Psoas muscle (tissue), 8 donors: ENCODE measurements at regions of chr18 and their contacts with region 1.

Region 1: DNA sequence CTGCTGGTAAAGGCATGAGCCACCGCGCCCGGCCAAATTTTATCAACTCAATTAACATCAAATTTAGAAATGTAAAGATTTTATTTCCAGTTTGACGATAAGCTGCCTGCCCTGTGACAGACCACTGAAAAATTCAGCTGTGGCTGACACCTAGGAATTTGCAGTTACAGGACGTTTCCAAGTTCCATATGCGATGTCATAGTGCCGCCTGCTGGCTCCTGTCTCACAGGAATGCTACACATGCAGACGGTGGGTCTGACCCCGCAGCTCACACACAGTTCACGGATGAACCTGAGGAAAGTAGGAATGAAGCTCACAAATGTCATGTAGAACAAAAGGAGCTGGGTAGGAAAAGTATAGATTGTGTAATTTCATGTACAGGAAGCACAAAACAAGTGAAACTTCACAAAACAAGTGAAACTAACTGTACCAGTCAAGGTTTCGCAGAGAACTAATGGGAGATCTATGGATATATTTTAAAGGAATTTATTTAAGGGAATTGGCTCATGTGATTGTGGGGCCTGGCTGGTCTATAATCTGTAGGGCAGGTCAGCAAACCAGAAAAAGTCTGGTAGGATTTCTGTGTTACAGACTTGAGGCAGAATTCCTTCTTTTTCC is 13.2 kb upstream of the SEH1L start:
- DNase-seq: peak; percentile 80 to 87
- ATAC-seq: peak; percentile 89 to 98 (median 93)
- H3K4me3 ChIP-seq: no peak overlapping the region
- H3K27ac ChIP-seq: no peak overlapping the region
- H3K4me1 ChIP-seq: no peaks in the 10 kb centered on the region
- H3K27me3 ChIP-seq: no peaks in the 10 kb centered on the region
- CTCF ChIP-seq: peak; percentile 93

Region 2: GRCh38 chr18:12726774-12727550 is 207.6 kb before region 1 on chr18:
- intact Hi-C with region 1: loop called (anchors 1 kb)
- DNase-seq: no peak
- ATAC-seq: peak; percentile 62 to 83 (median 72)
- H3K4me3 ChIP-seq: no peak overlapping the region
- H3K27ac ChIP-seq: no peak overlapping the region
- H3K4me1 ChIP-seq: no peaks in the 10 kb centered on the region
- H3K27me3 ChIP-seq: no peaks in the 10 kb centered on the region
- CTCF ChIP-seq: peak; percentile 94

Region 3: GRCh38 chr18:12744103-12744502 is 190.5 kb before region 1 on chr18:
- intact Hi-C with region 1: loop called in 1 of 2 experiments (anchors 5 kb)
- DNase-seq: no peak
- ATAC-seq: peak in 2 of 4 donors; percentile 56 to 62
- H3K4me3 ChIP-seq: no peak overlapping the region
- H3K27ac ChIP-seq: no peak overlapping the region
- H3K4me1 ChIP-seq: no peaks in the 10 kb centered on the region
- H3K27me3 ChIP-seq: no peaks in the 10 kb centered on the region
- CTCF ChIP-seq: peak; percentile 54

Region 4: DNA sequence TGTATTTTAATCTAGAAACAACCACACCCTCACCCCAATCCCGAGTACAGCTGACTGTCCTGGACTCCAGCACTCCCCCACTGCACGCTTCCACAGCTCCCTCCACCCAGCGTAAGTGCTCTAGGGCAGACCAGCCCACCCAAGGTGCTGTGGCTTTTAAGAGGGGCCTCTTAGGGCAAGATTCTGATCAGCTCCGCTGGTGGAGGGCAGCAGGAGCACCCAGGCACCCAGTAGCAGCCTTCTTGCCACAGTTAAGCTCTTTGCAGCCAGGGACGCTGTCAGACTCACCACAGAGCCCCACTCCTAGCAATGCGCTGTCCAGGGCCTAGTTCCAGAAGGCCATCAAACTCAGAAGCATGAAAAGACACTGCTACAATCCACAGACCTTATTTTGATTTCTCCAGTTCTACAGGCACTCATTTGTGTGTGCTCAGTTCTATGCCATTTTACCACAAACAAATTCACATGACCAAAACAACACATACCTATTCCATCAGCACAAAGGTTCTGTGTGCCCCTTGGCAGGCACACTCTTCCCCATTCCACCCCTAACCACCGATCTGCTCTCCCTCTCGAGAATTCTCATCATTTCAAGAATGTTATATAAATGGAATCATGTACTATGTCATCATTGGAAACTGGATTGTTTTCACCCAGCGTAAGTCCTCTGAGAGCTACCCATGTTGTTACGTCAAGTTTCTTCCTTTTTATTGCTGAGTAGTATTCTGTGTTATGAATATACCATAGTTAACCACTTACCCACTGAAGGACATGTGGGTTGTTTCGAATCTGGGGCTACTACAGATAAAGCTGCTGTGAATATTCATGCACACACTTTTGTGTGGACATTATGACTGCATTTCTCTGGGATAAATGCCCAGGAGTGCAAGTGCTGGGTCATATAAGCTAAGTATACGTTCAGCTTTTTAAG is 90.9 kb before region 1 on chr18:
- intact Hi-C with region 1: no loop called
- DNase-seq: no peak
- ATAC-seq: no peak
- H3K4me3 ChIP-seq: no peak overlapping the region
- H3K27ac ChIP-seq: no peak overlapping the region
- H3K4me1 ChIP-seq: peaks cover under 1% of the 10 kb centered on the region
- H3K27me3 ChIP-seq: no peaks in the 10 kb centered on the region
- CTCF ChIP-seq: no peak

Region 5: DNA sequence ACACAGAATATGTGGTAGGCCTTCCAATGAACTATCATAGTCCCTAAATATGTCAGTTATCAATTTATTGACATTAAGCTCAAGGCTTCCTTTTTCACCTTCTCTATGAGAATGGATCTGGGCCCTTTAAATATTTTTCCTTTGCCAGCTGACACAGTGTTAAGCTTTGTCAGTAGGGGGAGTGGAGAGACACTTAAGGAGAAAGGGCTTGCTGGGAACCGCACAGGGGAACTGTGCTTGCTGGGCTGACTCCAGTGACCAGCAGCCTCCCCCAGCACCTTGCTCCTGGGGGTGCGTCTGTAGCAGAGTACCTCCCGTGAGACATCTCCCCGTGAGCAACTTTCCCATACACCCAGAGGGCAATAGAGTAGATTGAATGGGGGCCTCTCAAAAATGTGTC is 44.1 kb before region 1 on chr18:
- intact Hi-C with region 1: loop called in 1 of 2 experiments (anchors 5 kb)
- DNase-seq: no peak
- ATAC-seq: no peak
- H3K4me3 ChIP-seq: no peak overlapping the region
- H3K27ac ChIP-seq: no peak overlapping the region
- H3K4me1 ChIP-seq: no peaks in the 10 kb centered on the region
- H3K27me3 ChIP-seq: peaks cover 0 to 15% (median 1%) of the 10 kb centered on the region in 3 donors
- CTCF ChIP-seq: no peak